ENCODE measurements at regions of chrX and their contacts with region 1.

Region 1: GRCh38 chrX:77975801-77976200 is 6.4 kb upstream of the PGAM4 start:
- DNase-seq: no peak
- H3K4me3 Mint-ChIP-seq: no peak overlapping the region
- H3K27ac Mint-ChIP-seq: no peak overlapping the region
- H3K4me1 Mint-ChIP-seq: no peaks in the 10 kb centered on the region
- H3K27me3 Mint-ChIP-seq: no peaks in the 10 kb centered on the region

Region 2: DNA sequence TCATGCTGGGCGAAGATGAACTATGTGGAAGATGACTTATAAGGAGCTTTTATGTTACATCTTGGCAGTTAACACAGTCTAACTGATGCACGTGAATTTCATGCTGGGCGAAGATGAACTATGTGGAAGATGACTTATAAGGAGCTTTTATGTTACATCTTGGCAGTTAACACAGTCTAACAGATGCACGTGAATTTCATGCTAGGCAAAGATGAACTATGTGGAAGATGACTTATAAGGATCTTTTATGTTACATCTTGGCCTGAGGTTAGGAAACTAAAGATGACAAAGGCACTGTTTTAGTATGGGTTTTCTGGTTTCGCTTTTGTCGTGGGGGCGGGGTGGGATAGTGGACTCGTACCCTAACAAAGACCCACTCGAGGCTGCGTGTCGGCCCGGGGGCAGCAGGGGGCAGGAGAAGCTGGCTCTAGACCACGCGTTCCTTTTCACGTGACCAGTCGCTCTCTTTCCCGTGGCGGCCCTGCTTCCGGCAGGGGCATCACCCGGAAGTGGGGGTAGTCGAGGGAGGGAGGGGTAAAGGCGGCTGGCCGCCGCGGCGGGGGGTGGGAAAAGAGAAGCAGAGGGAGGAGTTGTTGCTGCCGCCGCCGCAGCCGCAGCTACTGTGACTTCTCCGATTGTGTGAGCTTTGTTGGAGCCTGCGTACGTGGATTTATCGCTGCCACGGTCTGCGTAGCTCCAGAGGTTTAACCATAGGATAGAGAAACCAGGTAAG is 65.5 kb before region 1 on chrX and contains the start of gene ATP7A:
- CTCF ChIA-PET with region 1: no interaction called
- POLR2A ChIA-PET with region 1: no interaction called
- intact Hi-C with region 1: no loop called
- DNase-seq: peak; percentile 95
- H3K4me3 Mint-ChIP-seq: peak within 1 kb of the TSS; percentile 99
- H3K27ac Mint-ChIP-seq: peak within 1 kb of the TSS; percentile 99
- H3K4me1 Mint-ChIP-seq: peaks cover 19% of the 10 kb centered on the region
- H3K27me3 Mint-ChIP-seq: no peaks in the 10 kb centered on the region
- total RNA-seq, gene ATP7A: 8.0 TPM

Region 3: DNA sequence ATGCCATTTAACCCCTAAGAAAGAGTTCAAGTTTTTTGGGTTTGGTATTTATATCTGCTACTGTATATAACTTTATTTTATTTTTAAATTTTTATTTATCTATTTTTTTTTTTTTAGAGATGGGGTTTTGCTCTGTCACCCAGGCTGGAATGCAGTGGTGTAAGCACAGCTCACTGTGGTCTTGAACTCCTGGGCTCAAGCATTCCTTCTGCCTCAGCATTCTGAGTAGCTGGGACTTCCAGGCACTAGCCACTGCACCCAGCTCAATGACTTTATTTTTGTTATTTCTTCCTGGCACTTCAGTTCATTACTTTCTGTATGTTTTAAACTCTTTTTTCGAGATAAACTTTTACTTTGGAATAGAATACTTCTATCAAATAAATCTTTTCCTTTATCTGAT is 36.0 kb after region 1 on chrX:
- CTCF ChIA-PET with region 1: no interaction called
- POLR2A ChIA-PET with region 1: no interaction called
- intact Hi-C with region 1: loop called (anchors 5 kb)
- DNase-seq: no peak
- H3K4me3 Mint-ChIP-seq: no peak overlapping the region
- H3K27ac Mint-ChIP-seq: no peak overlapping the region
- H3K4me1 Mint-ChIP-seq: no peaks in the 10 kb centered on the region
- H3K27me3 Mint-ChIP-seq: no peaks in the 10 kb centered on the region

Region 4: GRCh38 chrX:79122019-79122418 is 1146.2 kb after region 1 on chrX:
- CTCF ChIA-PET with region 1: no interaction called
- POLR2A ChIA-PET with region 1: no interaction called
- intact Hi-C with region 1: no loop called
- DNase-seq: no peak
- H3K4me3 Mint-ChIP-seq: no peak overlapping the region
- H3K27ac Mint-ChIP-seq: no peak overlapping the region
- H3K4me1 Mint-ChIP-seq: peaks cover 20% of the 10 kb centered on the region
- H3K27me3 Mint-ChIP-seq: no peaks in the 10 kb centered on the region